Activated CD4-positive, alpha-beta T cell treated with anti-CD3 and anti-CD28 coated beads for 36 hours (primary cell): ENCODE measurements at regions of chr19 and their contacts with region 1.

Region 1: DNA sequence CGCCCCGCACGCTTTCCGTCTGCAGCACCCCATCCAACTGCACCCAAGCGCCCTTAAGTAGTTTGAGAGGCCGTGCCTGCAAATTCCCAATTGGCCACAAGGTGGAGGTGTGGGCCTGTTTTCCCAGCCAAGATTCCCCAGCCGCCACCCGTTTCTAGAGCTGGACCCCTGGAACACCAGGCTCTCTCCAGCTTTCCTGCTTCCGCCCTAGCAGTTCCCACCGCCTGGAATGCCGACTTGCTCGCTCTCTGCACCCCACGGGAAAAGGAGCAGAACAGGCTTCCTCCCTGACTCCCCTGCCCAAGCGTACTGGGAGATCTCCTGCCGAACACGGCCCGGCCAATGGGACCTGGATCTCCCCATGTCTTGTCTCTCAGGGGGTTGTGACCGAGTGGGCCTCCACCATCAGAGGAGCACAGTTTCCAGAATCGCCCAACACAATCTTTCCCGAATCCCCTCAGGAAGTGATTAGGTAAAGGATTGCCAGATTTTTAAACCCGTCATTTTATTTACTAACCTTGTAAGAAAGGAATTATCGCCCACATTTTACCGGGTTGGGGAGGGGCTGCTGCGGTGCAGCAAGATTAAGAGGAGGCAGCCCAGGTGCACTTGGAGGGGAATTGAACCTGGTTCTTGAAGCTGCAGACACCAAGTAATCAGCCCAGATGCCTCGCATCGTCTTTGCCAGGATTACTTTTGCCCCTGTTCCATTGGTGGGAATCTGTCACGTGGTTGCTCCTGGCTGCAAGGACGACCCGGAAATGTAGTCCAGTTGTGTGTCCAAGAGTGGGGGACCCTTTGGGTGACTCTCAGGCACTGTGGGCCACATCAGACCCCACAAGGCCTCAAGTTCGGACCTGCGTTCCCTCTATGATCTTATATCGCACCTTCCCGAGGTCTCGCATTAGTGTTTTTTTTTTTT is 3.5 kb upstream of the NAPSA start:
- DNase-seq: peak; percentile 87
- ATAC-seq: peak; percentile 50
- H3K4me3 Mint-ChIP-seq: peak overlapping the region; percentile 82
- H3K27ac Mint-ChIP-seq: peak overlapping the region; percentile 90
- H3K4me1 Mint-ChIP-seq: peaks cover 45% of the 10 kb centered on the region
- H3K27me3 Mint-ChIP-seq: no peaks in the 10 kb centered on the region

Region 2: GRCh38 chr19:49793445-49793783 is 575.5 kb before region 1 on chr19:
- CTCF ChIA-PET with region 1: no interaction called
- POLR2A ChIA-PET with region 1: no interaction called
- intact Hi-C with region 1: no loop called
- DNase-seq: peak; percentile 57
- ATAC-seq: peak; percentile 100
- H3K4me3 Mint-ChIP-seq: no peak overlapping the region
- H3K27ac Mint-ChIP-seq: no peak overlapping the region
- H3K4me1 Mint-ChIP-seq: peaks cover 5% of the 10 kb centered on the region
- H3K27me3 Mint-ChIP-seq: no peaks in the 10 kb centered on the region

Region 3: DNA sequence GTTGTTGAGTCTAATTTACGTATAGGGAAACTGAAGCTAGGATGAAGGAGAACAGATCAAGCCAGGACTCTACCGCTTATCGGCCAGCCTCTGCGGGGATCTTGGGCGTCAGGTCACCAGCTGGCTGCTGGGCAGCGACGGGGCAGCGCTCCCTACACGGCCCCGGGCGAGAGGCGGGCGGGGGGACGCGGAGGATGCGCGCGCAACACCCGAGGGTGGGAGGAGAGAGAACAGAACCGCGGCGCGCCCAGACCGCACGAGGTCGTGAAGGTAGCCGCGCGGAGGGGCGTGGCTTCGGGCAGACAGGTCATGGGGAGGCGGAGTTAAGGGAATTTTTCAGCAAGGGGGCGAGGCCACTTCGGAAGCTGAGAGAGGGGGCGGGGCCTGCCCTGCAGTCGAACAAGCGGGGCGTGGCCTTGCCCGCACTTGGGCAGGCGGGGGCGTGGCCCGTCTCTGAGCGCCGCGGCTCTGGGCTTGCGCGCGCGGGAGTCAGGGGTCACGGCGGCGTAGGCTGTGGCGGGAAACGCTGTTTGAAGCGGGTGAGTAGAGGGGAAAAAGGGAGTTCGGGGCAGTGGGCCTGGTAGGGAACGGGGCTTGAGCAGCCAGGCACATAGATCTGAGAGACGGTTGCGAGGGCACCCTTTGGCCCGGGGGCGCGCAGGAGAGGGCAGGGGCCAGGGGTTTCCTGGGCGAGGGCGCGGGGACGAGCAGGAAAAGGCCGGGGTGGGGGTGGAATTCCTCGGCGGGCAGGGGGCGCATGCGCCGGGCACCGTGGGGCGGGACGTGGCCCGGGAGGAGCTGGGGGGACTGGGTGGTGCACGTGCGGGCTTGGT is 15.2 kb after region 1 on chr19 and contains the start of gene POLD1:
- CTCF ChIA-PET with region 1: interaction called, 3 read pairs
- POLR2A ChIA-PET with region 1: interaction called, 3 read pairs
- intact Hi-C with region 1: loop called in 1 of 2 experiments (anchors 1 kb)
- DNase-seq: peak; percentile 100
- ATAC-seq: peak; percentile 92
- H3K4me3 Mint-ChIP-seq: peak within 1 kb of the TSS; percentile 99
- H3K27ac Mint-ChIP-seq: peak within 1 kb of the TSS; percentile 93
- H3K4me1 Mint-ChIP-seq: peaks cover 27% of the 10 kb centered on the region
- H3K27me3 Mint-ChIP-seq: no peaks in the 10 kb centered on the region
- total RNA-seq, gene POLD1: 220 to 227 TPM

Region 4: GRCh38 chr19:50414864-50415660 is 46.2 kb after region 1 on chr19:
- CTCF ChIA-PET with region 1: no interaction called
- POLR2A ChIA-PET with region 1: no interaction called
- intact Hi-C with region 1: loop called (anchors 1 to 2 kb)
- DNase-seq: peak; percentile 87
- ATAC-seq: peak; percentile 83
- H3K4me3 Mint-ChIP-seq: no peak overlapping the region
- H3K27ac Mint-ChIP-seq: no peak overlapping the region
- H3K4me1 Mint-ChIP-seq: peaks cover 9% of the 10 kb centered on the region
- H3K27me3 Mint-ChIP-seq: peaks cover 8% of the 10 kb centered on the region

Region 5: GRCh38 chr19:50461066-50461875 is 92.4 kb after region 1 on chr19:
- CTCF ChIA-PET with region 1: interaction called, 8 read pairs
- POLR2A ChIA-PET with region 1: no interaction called
- intact Hi-C with region 1: loop called (anchors 1 kb)
- DNase-seq: peak; percentile 79
- ATAC-seq: peak; percentile 70
- H3K4me3 Mint-ChIP-seq: peak overlapping the region; percentile 3
- H3K27ac Mint-ChIP-seq: no peak overlapping the region
- H3K4me1 Mint-ChIP-seq: peaks cover 16% of the 10 kb centered on the region
- H3K27me3 Mint-ChIP-seq: peaks cover 25% of the 10 kb centered on the region

Region 6: GRCh38 chr19:50556282-50557008 is 187.5 kb after region 1 on chr19:
- CTCF ChIA-PET with region 1: interaction called, 3 read pairs
- POLR2A ChIA-PET with region 1: no interaction called
- intact Hi-C with region 1: loop called in 1 of 2 experiments (anchors 1 kb)
- DNase-seq: peak; percentile 92
- ATAC-seq: peak; percentile 89
- H3K4me3 Mint-ChIP-seq: peak overlapping the region; percentile 68
- H3K27ac Mint-ChIP-seq: peak overlapping the region; percentile 85
- H3K4me1 Mint-ChIP-seq: peaks cover 2% of the 10 kb centered on the region
- H3K27me3 Mint-ChIP-seq: peaks cover 53% of the 10 kb centered on the region

Region 7: GRCh38 chr19:50794439-50795237 is 425.7 kb after region 1 on chr19:
- CTCF ChIA-PET with region 1: no interaction called
- POLR2A ChIA-PET with region 1: no interaction called
- intact Hi-C with region 1: loop called in 1 of 2 experiments (anchors 10 kb)
- DNase-seq: peak; percentile 58
- ATAC-seq: peak; percentile 27
- H3K4me3 Mint-ChIP-seq: peak overlapping the region; percentile 26
- H3K27ac Mint-ChIP-seq: no peak overlapping the region
- H3K4me1 Mint-ChIP-seq: peaks cover 6% of the 10 kb centered on the region
- H3K27me3 Mint-ChIP-seq: no peaks in the 10 kb centered on the region